Calu3 (cell line): ENCODE measurements at regions of chr12 and their contacts with region 1.

Region 1: GRCh38 chr12:124906606-124907261 is 7.7 kb downstream of the UBC start:
- DNase-seq: peak; percentile 95
- H3K4me3 Mint-ChIP-seq: no peak overlapping the region
- H3K27ac Mint-ChIP-seq: peak overlapping the region; percentile 55
- H3K4me1 Mint-ChIP-seq: peaks cover 48% of the 10 kb centered on the region
- H3K27me3 Mint-ChIP-seq: no peaks in the 10 kb centered on the region
- CTCF ChIP-seq: peak; percentile 95

Region 2: GRCh38 chr12:124888260-124888659 is 18.5 kb before region 1 on chr12:
- CTCF ChIA-PET with region 1: no interaction called
- intact Hi-C with region 1: no loop called
- DNase-seq: no peak
- H3K4me3 Mint-ChIP-seq: no peak overlapping the region
- H3K27ac Mint-ChIP-seq: no peak overlapping the region
- H3K4me1 Mint-ChIP-seq: peaks cover 15% of the 10 kb centered on the region
- H3K27me3 Mint-ChIP-seq: no peaks in the 10 kb centered on the region
- CTCF ChIP-seq: no peak

Region 3: DNA sequence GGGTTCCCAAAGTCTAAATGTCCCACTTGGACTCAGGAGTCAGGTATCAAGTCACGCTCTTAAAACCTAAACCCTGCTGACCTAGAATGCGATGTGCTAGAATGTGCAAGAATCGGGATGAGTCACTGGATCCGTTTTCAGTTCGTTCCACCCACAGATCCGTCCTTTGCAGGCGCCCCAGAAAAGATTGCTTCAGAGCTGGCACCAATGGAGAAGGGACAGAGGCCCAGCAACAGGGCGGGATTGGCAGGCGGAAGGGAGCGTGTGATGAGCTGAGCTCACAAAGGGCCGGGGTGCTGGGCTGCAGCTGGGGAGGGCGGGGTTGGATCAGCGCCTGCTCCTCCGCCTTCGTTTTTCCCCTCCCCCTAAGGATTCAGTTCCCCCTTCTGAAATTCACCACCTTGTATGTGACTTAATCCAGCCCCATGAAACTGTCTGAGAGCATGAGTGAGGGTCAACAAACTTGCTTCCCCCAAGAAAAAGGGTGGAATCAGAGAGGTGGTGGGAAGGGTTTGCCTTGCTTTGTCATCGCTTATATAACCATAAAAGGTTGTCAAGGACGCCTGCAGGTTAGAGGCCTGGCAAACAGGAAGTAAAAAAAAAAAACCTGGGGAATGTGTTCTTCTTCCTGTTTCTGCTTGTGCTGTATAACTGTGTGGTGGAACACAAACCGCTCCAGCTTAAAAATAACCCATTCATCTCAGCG is 10.6 kb after region 1 on chr12:
- CTCF ChIA-PET with region 1: interaction called, 39 read pairs
- intact Hi-C with region 1: no loop called
- DNase-seq: peak; percentile 97
- H3K4me3 Mint-ChIP-seq: peak overlapping the region; percentile 98
- H3K27ac Mint-ChIP-seq: peak overlapping the region; percentile 100
- H3K4me1 Mint-ChIP-seq: peaks cover 74% of the 10 kb centered on the region
- H3K27me3 Mint-ChIP-seq: peaks cover 25% of the 10 kb centered on the region
- CTCF ChIP-seq: no peak

Region 4: DNA sequence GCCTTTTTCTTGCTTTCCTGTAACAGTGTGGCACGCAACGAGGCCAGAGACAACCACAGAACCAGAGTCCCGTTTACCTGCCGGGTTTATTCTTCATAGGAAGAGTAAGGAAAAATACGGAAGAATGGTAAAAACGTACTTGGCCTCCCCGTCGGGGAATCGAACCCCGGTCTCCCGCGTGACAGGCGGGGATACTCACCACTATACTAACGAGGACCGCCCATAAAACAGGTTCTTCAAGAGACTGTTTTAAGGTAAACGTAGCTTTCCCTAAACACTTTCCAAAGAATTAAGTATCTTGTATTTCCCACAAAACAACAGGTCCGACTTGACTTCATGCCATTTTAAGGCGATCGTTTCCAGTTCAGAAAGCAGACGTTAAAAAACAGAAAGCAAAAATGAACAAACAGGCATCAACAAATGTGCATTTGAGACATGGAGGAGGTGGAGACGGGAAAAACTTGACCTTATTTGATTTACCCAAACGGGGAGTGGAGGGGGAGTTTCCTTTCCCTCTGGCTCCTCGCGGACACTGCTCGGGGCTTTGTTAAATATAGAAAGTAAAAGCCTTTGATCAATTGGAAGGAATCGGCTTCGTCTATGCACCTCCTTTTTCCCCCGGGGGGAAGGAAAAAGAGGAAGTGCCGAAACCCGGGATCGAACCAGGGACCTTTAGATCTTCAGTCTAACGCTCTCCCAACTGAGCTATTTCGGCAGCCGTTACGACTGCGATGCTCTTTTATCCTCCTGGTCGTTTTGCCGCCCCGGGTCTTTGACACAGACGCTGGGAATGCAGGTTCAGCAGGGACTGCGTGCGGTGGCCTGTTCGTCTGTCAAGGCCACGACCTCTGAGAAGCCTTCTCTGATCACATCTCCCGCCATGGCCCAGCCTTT is 20.7 kb after region 1 on chr12:
- CTCF ChIA-PET with region 1: interaction called, 10 read pairs
- intact Hi-C with region 1: no loop called
- DNase-seq: peak; percentile 95
- H3K4me3 Mint-ChIP-seq: peak overlapping the region; percentile 69
- H3K27ac Mint-ChIP-seq: peak overlapping the region; percentile 100
- H3K4me1 Mint-ChIP-seq: peaks cover 37% of the 10 kb centered on the region
- H3K27me3 Mint-ChIP-seq: peaks cover 16% of the 10 kb centered on the region
- CTCF ChIP-seq: no peak

Region 5: GRCh38 chr12:124940549-124941527 is 34.1 kb after region 1 on chr12:
- CTCF ChIA-PET with region 1: interaction called, 91 read pairs
- intact Hi-C with region 1: loop called (anchors 1 kb)
- DNase-seq: peak; percentile 93
- H3K4me3 Mint-ChIP-seq: no peak overlapping the region
- H3K27ac Mint-ChIP-seq: no peak overlapping the region
- H3K4me1 Mint-ChIP-seq: peaks cover 17% of the 10 kb centered on the region
- H3K27me3 Mint-ChIP-seq: no peaks in the 10 kb centered on the region
- CTCF ChIP-seq: peak; percentile 80

Region 6: GRCh38 chr12:124961726-124962125 is 55.0 kb after region 1 on chr12:
- CTCF ChIA-PET with region 1: interaction called, 10 read pairs
- intact Hi-C with region 1: no loop called
- DNase-seq: no peak
- H3K4me3 Mint-ChIP-seq: no peak overlapping the region
- H3K27ac Mint-ChIP-seq: no peak overlapping the region
- H3K4me1 Mint-ChIP-seq: peaks cover 6% of the 10 kb centered on the region
- H3K27me3 Mint-ChIP-seq: no peaks in the 10 kb centered on the region
- CTCF ChIP-seq: no peak